Endothelial cell of umbilical vein (primary cell): ENCODE measurements at regions of chr3 and their contacts with region 1.

Region 1: GRCh38 chr3:149771652-149772271 is 19.5 kb upstream of the COMMD2 start:
- DNase-seq: peak; percentile 58
- H3K4me3 ChIP-seq: no peak overlapping the region
- H3K27ac ChIP-seq: no peak overlapping the region
- H3K4me1 ChIP-seq: no peaks in the 10 kb centered on the region
- H3K27me3 ChIP-seq: peaks cover 3% of the 10 kb centered on the region in 2 experiments
- CTCF ChIP-seq: peak; percentile 70 to 83
- POLR2A ChIP-seq: no peak

Region 2: GRCh38 chr3:149494022-149494758 is 277.6 kb before region 1 on chr3:
- CTCF ChIA-PET with region 1: interaction called, 101 read pairs
- POLR2A ChIA-PET with region 1: no interaction called
- dilution Hi-C with region 1: no loop called
- intact Hi-C with region 1: loop called (anchors 1 kb)
- DNase-seq: peak; percentile 76
- H3K4me3 ChIP-seq: no peak overlapping the region
- H3K27ac ChIP-seq: no peak overlapping the region
- H3K4me1 ChIP-seq: peaks cover 6% of the 10 kb centered on the region
- H3K27me3 ChIP-seq: no peaks in the 10 kb centered on the region
- CTCF ChIP-seq: peak; percentile 80 to 83
- POLR2A ChIP-seq: no peak

Region 3: GRCh38 chr3:149512209-149512782 is 259.5 kb before region 1 on chr3:
- CTCF ChIA-PET with region 1: interaction called, 103 read pairs
- POLR2A ChIA-PET with region 1: no interaction called
- dilution Hi-C with region 1: no loop called
- intact Hi-C with region 1: loop called (anchors 1 kb)
- DNase-seq: peak; percentile 77
- H3K4me3 ChIP-seq: no peak overlapping the region
- H3K27ac ChIP-seq: no peak overlapping the region
- H3K4me1 ChIP-seq: peaks cover 18% of the 10 kb centered on the region
- H3K27me3 ChIP-seq: no peaks in the 10 kb centered on the region
- CTCF ChIP-seq: peak; percentile 66 to 71
- POLR2A ChIP-seq: no peak

Region 4: GRCh38 chr3:149527531-149528339 is 244.0 kb before region 1 on chr3:
- CTCF ChIA-PET with region 1: interaction called, 19 read pairs
- POLR2A ChIA-PET with region 1: no interaction called
- dilution Hi-C with region 1: no loop called
- intact Hi-C with region 1: no loop called
- DNase-seq: peak; percentile 85
- H3K4me3 ChIP-seq: no peak overlapping the region
- H3K27ac ChIP-seq: peak overlapping the region; percentile 62
- H3K4me1 ChIP-seq: peaks cover 43% of the 10 kb centered on the region
- H3K27me3 ChIP-seq: no peaks in the 10 kb centered on the region
- CTCF ChIP-seq: peak in 1 of 2 donors; percentile 50
- POLR2A ChIP-seq: no peak

Region 5: DNA sequence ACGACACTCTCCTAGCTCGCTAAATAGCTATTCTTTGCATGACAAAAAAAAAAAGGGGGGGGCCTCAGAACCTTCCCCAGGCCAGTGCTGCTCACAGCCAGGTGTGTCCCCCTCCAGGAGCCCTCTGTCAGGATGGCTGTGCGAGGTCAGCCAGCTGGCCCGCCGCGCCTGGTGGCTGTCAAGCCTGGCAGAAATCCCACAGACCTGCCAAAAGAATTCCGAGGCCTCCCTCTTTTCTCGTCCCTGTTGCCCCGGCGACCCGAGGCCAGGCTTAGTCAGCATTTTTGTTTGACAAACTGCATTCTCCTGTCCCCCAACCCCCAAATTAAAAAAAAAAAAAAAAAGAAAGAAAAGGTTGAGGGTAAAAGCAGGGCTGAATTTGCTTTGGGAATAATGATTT is 235.3 kb before region 1 on chr3:
- CTCF ChIA-PET with region 1: interaction called, 10 read pairs
- POLR2A ChIA-PET with region 1: no interaction called
- dilution Hi-C with region 1: no loop called
- intact Hi-C with region 1: no loop called
- DNase-seq: no peak
- H3K4me3 ChIP-seq: no peak overlapping the region
- H3K27ac ChIP-seq: peak overlapping the region; percentile 20
- H3K4me1 ChIP-seq: peaks cover 79% of the 10 kb centered on the region
- H3K27me3 ChIP-seq: no peaks in the 10 kb centered on the region
- CTCF ChIP-seq: no peak
- POLR2A ChIP-seq: no peak

Region 6: DNA sequence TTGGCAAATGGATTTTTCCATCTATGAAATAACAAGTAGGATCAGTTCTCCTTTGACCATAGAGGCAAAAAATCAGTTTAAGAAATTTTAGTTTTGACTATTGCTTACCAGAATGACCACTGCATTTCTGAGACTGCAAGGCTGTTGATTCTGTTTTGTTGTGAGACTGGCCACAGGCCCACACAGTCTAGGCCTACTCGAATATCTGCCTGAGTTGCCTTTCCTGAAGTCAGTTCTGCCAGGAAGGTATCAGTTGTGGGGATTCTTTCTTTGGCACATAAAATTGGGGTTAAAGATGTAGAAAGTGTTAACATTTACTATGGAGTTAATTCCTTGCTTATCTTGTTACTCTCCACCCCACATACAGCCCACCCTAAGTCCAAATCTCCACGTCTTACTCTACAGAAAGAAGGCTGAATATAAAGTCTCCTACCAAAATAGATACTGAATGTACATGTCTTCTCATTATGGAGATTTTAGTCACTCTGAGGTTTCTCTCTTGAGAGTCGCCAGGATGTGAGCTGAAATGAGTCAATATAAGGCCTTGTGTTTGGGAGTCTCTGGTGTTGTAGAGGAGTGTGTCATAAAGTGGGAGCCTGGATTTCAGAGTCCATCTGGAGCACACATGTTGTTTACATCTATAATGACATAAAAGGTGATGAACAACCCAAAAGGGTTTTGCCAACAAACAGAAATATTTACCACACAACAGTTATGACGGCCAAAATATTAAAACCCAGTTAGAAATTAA is 68.9 kb before region 1 on chr3:
- CTCF ChIA-PET with region 1: no interaction called
- POLR2A ChIA-PET with region 1: no interaction called
- dilution Hi-C with region 1: no loop called
- intact Hi-C with region 1: no loop called
- DNase-seq: no peak
- H3K4me3 ChIP-seq: no peak overlapping the region
- H3K27ac ChIP-seq: no peak overlapping the region
- H3K4me1 ChIP-seq: no peaks in the 10 kb centered on the region
- H3K27me3 ChIP-seq: no peaks in the 10 kb centered on the region
- CTCF ChIP-seq: no peak
- POLR2A ChIP-seq: no peak

Region 7: DNA sequence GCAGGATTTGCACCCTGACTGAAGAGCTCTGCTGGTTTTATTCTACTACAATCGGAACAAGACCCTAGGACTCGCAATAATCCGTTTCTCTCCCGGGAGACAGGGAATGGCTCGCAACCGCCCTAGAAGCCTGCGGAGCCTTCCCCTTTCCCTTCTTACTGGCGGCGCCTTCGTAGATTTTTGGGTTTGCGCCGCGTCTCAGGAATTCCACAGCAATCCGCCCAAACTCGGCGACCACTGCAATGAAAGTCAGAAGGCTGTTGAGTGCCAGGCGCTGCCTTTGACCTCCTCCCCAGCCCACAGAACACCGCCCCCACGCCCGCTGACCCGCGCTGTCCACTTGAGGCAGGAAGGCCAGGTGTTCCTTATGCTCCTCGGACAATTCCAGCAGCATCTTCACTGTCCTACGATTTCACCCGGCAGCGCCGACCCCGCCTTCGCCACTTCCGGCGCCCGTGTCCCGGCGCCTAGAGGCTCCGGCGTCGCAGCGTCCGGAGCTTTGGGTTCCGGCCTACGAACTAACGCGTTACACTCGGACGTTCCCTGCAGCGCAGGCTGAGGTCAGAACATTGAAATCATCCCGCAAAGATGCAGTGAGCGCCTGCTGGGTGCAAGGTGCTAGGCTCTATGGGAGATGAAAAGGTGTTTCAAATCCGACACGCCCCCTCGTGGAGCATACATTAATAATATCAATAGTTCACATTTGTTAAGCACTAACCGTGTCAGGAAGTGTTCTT is 19.5 kb before region 1 on chr3 and contains the start of gene COMMD2:
- CTCF ChIA-PET with region 1: interaction called, 28 read pairs
- POLR2A ChIA-PET with region 1: no interaction called
- dilution Hi-C with region 1: no loop called
- intact Hi-C with region 1: no loop called
- DNase-seq: peak; percentile 83
- H3K4me3 ChIP-seq: peak within 1 kb of the TSS; percentile 74 to 94 (median 91)
- H3K27ac ChIP-seq: peak within 1 kb of the TSS; percentile 33
- H3K4me1 ChIP-seq: peaks cover 15% of the 10 kb centered on the region
- H3K27me3 ChIP-seq: no peaks in the 10 kb centered on the region
- CTCF ChIP-seq: peak in 1 of 2 donors; percentile 17
- POLR2A ChIP-seq: peak; percentile 86
- total RNA-seq, gene COMMD2: 42.9 and 51.0 TPM in 2 replicates

Region 8: DNA sequence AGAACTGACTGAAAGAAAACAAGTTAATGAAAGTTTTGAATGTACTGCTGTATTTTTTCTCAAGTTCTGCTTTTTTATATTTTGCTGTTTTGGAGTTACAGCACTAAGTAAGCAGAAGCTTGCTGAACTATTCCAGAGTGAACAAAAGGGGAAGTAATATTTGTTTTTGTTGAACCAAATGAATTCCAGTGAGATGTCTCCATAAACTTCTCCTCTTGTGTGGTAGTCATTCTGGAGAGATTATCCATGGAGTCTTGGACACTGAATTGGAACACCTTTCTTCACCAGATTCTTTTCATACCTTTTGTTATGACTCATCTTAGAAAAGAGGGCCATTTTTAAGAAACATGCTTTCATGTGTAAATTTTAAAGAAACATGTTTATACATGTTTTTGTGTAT is 11.8 kb after region 1 on chr3:
- CTCF ChIA-PET with region 1: interaction called, 24 read pairs
- POLR2A ChIA-PET with region 1: no interaction called
- dilution Hi-C with region 1: no loop called
- intact Hi-C with region 1: no loop called
- DNase-seq: peak; percentile 33
- H3K4me3 ChIP-seq: no peak overlapping the region
- H3K27ac ChIP-seq: no peak overlapping the region
- H3K4me1 ChIP-seq: peaks cover 8% of the 10 kb centered on the region
- H3K27me3 ChIP-seq: peaks cover 0 to 3% of the 10 kb centered on the region in 2 experiments
- CTCF ChIP-seq: no peak
- POLR2A ChIP-seq: no peak